ENCODE measurements at regions of chr1 and their contacts with region 1.

Region 1: DNA sequence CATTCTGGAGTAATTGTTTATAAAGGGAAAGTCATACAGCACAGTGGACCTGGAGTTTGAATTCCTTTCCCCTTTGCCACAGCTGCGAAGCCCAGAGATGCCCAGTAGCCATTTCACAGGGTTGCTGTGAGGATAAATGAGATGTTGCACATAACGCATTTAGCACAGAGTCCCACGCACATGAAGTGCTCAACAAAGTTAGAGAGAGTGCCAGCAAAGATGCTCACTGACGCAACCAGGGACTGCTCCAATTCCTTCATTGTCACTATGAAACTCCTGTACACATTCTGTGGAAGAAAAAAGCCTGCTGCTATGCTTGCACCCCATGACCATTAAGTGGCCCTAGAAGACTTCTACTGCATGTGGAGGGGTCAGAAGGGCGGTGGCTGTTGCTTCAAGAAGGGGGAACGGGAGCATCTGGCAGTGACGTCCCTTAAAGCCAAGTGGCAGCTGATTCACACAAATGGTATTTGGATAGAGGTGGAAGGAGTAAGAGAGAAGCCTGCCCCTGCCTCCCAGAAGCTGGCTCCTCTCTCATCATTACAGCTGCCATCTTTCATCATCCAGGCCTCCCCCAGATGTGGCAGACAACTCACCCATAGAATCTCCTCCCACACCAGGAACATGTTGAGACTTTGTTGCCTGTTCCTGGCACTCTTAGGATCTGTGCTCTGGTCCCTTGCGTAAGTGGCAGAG is 26.5 kb upstream of the VAV3 start:
- DNase-seq: peak; percentile 81
- H3K4me3 ChIP-seq: no peak overlapping the region
- H3K27ac ChIP-seq: no peak overlapping the region
- H3K4me1 ChIP-seq: peaks cover 34% of the 10 kb centered on the region
- H3K27me3 ChIP-seq: no peaks in the 10 kb centered on the region
- CTCF ChIP-seq: no peak

Region 2: DNA sequence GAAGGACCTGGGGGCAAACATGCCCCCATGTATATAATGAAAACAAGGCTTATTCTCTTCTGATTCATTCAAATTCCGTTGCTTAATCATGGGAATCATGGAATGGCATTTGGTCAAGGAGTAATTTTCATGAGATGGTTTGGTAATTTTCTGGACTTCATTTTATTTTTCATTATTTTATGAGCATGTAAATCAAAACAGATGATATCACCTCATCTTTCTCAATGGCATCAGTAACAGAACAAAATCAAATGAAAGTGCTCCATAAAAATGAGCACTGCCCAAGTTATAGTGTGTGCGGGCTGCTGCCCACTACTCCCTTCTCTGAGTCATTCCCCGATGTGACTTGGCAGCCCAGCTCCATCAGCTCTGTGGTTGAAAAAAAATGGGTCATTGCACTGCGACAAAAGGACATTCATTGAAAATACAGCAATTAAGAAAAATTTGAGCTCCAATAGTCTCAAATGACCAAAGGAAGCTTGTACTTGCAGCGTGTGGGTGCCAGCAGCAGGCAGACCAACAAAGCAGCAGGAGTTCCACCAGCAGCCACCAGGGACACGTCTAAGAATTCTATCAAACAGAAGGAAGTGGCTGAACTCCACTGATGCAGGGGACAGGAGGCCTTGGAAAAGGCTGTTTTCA is 57.8 kb after region 1 on chr1:
- CTCF ChIA-PET with region 1: no interaction called
- dilution Hi-C with region 1: no loop called
- in situ Hi-C with region 1: no loop called
- intact Hi-C with region 1: loop called (anchors 5 kb)
- DNase-seq: peak; percentile 12
- H3K4me3 ChIP-seq: no peak overlapping the region
- H3K27ac ChIP-seq: no peak overlapping the region
- H3K4me1 ChIP-seq: peaks cover 33% of the 10 kb centered on the region
- H3K27me3 ChIP-seq: no peaks in the 10 kb centered on the region
- CTCF ChIP-seq: peak; percentile 46 to 62